AG04449 (cell line): ENCODE measurements at regions of chr1 and their contacts with region 1.

Region 1: GRCh38 chr1:16017461-16018303 is at the start of gene HSPB7:
- DNase-seq: peak; percentile 42
- H3K4me3 ChIP-seq: peak within 1 kb of the TSS; percentile 25
- CTCF ChIP-seq: peak; percentile 15

Region 2: GRCh38 chr1:15949453-15950245 is 68.0 kb before region 1 on chr1:
- CTCF ChIA-PET with region 1: no interaction called
- POLR2A ChIA-PET with region 1: no interaction called
- DNase-seq: peak; percentile 85
- H3K4me3 ChIP-seq: peak overlapping the region; percentile 41
- CTCF ChIP-seq: no peak

Region 3: DNA sequence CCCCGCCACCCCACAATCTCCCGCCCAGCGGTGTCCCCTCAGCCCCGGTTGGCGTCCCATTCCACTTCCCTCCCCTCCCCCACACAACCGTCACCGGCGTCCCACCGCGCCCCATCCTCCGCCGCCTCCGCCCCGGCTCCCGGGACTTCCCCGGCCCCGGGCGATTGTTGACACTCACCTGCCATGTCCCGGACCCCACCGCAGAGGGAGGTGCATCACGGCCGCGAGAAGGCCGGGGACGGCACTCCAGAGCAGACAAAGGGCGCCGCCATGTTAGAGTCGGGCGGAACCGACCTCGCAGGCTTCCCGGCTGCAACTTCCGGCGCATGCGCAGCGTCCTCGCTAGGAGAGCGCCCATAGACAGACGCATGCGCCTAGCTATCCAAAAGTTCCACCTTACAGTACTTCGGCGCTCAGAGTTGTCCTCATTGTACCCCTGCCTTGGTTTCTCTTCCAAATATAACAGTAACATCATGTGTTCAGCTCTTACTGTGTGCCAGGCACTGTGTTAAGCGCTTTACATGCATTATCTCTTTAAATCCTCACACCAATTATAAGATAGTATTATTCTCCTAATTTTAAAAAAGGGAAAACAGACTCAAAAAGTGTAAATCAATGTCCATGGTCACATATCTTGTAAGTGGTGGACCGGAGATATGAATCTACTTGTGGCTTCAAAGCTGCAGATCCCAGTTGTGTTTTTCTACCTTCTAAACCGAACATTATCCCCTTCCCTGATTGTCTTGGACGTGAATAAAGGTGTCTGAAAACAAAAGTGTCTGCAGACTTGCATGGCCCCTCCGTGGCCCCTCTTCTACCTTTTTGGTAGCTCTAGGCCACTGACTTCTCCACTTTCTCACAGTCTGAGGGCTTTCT is 41.6 kb before region 1 on chr1 and contains the start of gene ZBTB17:
- CTCF ChIA-PET with region 1: no interaction called
- POLR2A ChIA-PET with region 1: no interaction called
- DNase-seq: no peak
- H3K4me3 ChIP-seq: peak within 1 kb of the TSS; percentile 76
- CTCF ChIP-seq: no peak

Region 4: GRCh38 chr1:16032388-16033103 is 14.9 kb after region 1 on chr1:
- CTCF ChIA-PET with region 1: interaction called, 44 read pairs
- POLR2A ChIA-PET with region 1: no interaction called
- DNase-seq: no peak
- H3K4me3 ChIP-seq: no peak overlapping the region
- CTCF ChIP-seq: peak; percentile 99

Region 5: DNA sequence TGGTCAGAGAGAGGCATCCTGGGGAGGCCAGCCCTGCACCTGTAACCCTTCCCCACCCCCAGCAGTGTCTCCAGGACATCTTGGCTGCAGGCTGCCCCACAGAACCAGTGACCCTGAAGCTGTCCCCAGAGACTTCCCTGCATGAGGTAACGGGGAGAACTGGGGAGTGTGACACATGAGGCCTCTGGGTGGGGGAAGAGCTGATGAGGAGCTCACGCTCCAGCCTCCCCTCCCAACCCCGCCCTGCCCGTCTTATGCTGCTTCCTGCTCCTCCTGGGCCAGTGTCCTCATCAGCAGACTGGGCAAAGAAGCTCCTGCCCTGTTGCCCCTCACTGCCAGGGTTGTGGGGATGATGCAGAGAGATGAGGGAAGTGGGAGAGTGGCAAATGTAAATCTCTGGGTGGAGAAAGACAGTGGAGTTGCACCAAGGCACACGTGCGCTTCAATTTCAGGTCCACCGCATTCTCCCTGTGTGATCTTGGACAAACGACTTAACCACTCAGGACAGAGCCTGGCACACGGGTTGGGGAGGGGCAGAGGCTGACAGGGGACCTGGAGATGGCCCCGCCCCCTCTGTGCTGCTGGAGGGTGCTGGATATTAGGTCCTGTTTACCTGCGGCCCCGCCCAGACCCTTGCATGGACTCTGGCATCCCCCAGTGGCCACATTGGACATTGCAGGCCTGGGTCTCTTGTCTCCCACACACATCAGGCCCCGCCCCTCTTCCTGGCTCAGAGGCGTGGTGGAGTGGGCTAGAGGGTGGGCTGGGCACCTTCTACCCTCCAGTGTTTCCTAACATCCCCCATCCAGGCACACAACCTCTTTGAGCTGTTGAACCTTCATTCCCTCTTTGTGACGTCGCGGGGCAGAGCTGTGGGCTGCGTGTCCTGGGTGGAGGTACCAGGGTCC is 38.2 kb after region 1 on chr1:
- CTCF ChIA-PET with region 1: interaction called, 129 read pairs
- POLR2A ChIA-PET with region 1: no interaction called
- DNase-seq: no peak
- H3K4me3 ChIP-seq: no peak overlapping the region
- CTCF ChIP-seq: peak; percentile 94

Region 6: GRCh38 chr1:16073490-16074119 is 55.9 kb after region 1 on chr1 and contains the start of gene FAM131C:
- CTCF ChIA-PET with region 1: interaction called, 141 read pairs
- POLR2A ChIA-PET with region 1: no interaction called
- DNase-seq: no peak
- H3K4me3 ChIP-seq: peak within 1 kb of the TSS; percentile 52
- CTCF ChIP-seq: peak; percentile 27